WTC11 (cell line): ENCODE measurements at regions of chr9 and their contacts with region 1.

Region 1: GRCh38 chr9:114914139-114914538 is 16.3 kb downstream of the TNFSF8 start:
- DNase-seq: no peak
- ATAC-seq: peak; percentile 71
- H3K4me3 Mint-ChIP-seq: no peak overlapping the region
- H3K27ac Mint-ChIP-seq: no peak overlapping the region
- H3K4me1 Mint-ChIP-seq: peaks cover 2% of the 10 kb centered on the region
- H3K27me3 Mint-ChIP-seq: peaks cover 95% of the 10 kb centered on the region
- CTCF ChIP-seq: no peak

Region 2: DNA sequence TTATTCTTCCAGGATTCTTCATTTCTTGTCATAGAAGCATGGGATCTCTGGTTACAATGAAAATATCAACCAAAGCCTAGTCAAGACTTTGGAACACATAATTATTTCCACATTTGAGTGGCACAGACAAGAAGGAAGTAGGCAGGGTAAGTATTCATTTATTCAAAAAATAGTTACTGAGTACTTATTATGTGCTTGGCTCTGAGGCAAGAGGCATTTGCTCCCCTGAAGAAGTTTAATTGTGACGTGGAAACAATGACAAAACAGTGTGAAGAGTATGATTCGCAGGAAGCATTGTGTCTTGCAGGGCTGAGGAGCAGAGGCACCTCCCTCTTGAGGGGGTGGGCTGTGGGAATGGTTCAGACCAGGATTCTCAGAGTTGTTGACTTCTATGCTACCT is 63.3 kb before region 1 on chr9:
- CTCF ChIA-PET with region 1: no interaction called
- POLR2A ChIA-PET with region 1: no interaction called
- DNase-seq: no peak
- ATAC-seq: no peak
- H3K4me3 Mint-ChIP-seq: no peak overlapping the region
- H3K27ac Mint-ChIP-seq: no peak overlapping the region
- H3K4me1 Mint-ChIP-seq: peaks cover 6% of the 10 kb centered on the region
- H3K27me3 Mint-ChIP-seq: no peaks in the 10 kb centered on the region; the same call in 1 of the 2 replicates
- CTCF ChIP-seq: no peak

Region 3: GRCh38 chr9:114861922-114862605 is 52.1 kb before region 1 on chr9:
- CTCF ChIA-PET with region 1: no interaction called
- POLR2A ChIA-PET with region 1: no interaction called
- DNase-seq: no peak
- ATAC-seq: no peak
- H3K4me3 Mint-ChIP-seq: no peak overlapping the region
- H3K27ac Mint-ChIP-seq: no peak overlapping the region
- H3K4me1 Mint-ChIP-seq: peaks cover 5% of the 10 kb centered on the region; the same call in 1 of the 2 replicates
- H3K27me3 Mint-ChIP-seq: peaks cover 10% of the 10 kb centered on the region
- CTCF ChIP-seq: no peak

Region 4: DNA sequence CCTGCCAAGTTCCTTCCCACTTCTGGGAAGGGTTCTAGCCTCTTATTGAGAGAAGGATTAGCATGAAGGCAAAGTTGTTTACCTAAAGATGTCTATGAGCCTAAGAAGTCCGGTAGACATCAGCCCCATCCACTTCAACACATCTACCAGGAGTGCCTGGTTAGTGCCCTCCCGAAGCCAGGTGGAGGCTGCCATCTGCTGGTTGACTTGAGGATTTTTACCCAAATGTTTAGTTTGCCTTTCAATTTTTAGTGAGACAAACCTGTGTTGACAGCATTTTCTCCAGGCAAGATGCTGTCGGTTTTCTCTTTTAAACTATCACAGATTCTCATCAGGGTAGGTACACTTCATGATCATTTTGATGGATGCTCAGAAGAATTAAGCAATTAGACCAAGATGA is 99.9 kb after region 1 on chr9:
- CTCF ChIA-PET with region 1: interaction called, 12 read pairs
- POLR2A ChIA-PET with region 1: no interaction called
- DNase-seq: peak; percentile 72
- ATAC-seq: peak; percentile 65
- H3K4me3 Mint-ChIP-seq: no peak overlapping the region
- H3K27ac Mint-ChIP-seq: no peak overlapping the region
- H3K4me1 Mint-ChIP-seq: 0 out of 2 replicates have a peak, but pooled peaks cover 3% of the 10 kb centered on the region
- H3K27me3 Mint-ChIP-seq: peaks cover 44% of the 10 kb centered on the region
- CTCF ChIP-seq: peak; percentile 76; the same call in 1 of the 2 replicates